ENCODE measurements at regions of chr16 and their contacts with region 1.

Region 1: GRCh38 chr16:56988948-56989945 is at the start of gene NLRC5:
- DNase-seq: peak; percentile 91
- ATAC-seq: peak; percentile 87
- H3K4me3 Mint-ChIP-seq: peak within 1 kb of the TSS; percentile 99
- H3K27ac Mint-ChIP-seq: peak within 1 kb of the TSS; percentile 99
- H3K4me1 Mint-ChIP-seq: peaks cover 56% of the 10 kb centered on the region
- H3K27me3 Mint-ChIP-seq: no peaks in the 10 kb centered on the region
- total RNA-seq, gene NLRC5: 401 to 414 TPM

Region 2: GRCh38 chr16:56964243-56965148 is 24.8 kb before region 1 on chr16:
- POLR2A ChIA-PET with region 1: interaction called, 16 read pairs
- DNase-seq: peak; percentile 99
- ATAC-seq: peak; percentile 79
- H3K4me3 Mint-ChIP-seq: no peak overlapping the region
- H3K27ac Mint-ChIP-seq: peak overlapping the region; percentile 87
- H3K4me1 Mint-ChIP-seq: peaks cover 21% of the 10 kb centered on the region
- H3K27me3 Mint-ChIP-seq: peaks cover 7% of the 10 kb centered on the region

Region 3: GRCh38 chr16:57000271-57001025 is 11.2 kb after region 1 on chr16:
- POLR2A ChIA-PET with region 1: interaction called, 47 read pairs
- DNase-seq: peak; percentile 39
- ATAC-seq: peak; percentile 48
- H3K4me3 Mint-ChIP-seq: peak overlapping the region; percentile 29
- H3K27ac Mint-ChIP-seq: peak overlapping the region; percentile 92
- H3K4me1 Mint-ChIP-seq: peaks cover 81% of the 10 kb centered on the region
- H3K27me3 Mint-ChIP-seq: no peaks in the 10 kb centered on the region

Region 4: GRCh38 chr16:57009643-57010170 is 20.5 kb after region 1 on chr16:
- POLR2A ChIA-PET with region 1: interaction called, 18 read pairs
- DNase-seq: peak; percentile 31
- ATAC-seq: peak; percentile 38
- H3K4me3 Mint-ChIP-seq: peak overlapping the region; percentile 43
- H3K27ac Mint-ChIP-seq: peak overlapping the region; percentile 80
- H3K4me1 Mint-ChIP-seq: peaks cover 61% of the 10 kb centered on the region
- H3K27me3 Mint-ChIP-seq: no peaks in the 10 kb centered on the region

Region 5: DNA sequence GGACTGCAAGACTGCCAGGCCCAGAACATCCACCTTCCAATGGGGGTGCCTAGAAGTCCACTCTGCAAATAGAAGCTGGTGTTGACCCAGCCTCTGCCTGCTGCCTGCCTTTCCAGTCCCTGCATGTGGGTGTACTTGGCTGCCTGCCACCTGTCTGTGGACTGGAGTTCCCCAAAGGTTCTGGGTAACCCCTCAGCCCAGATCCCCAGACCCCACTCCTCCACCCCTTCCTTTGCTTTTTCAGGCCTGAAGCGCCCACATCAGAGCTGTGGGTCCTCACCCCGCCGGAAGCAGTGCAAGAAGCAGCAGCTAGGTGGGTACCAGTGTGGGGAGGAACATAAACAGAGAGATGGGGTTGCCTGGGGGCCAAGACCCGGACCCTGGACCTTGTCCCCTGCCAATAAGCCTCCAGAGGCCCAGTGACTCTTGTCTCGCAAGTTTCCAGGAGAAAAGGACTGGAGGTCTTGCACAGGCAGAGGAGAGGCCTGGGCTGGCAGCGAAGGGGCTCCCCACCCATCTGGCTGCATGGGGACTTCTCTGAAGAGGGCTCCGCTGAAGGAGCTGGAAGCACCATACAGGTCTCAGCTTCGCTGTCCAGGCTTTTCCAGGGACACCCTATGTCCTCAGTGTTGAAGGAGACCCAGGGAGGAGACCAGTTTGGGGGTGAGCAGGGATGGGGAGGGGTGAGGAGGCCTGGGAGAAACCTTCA is 34.4 kb after region 1 on chr16:
- POLR2A ChIA-PET with region 1: interaction called, 25 read pairs
- DNase-seq: peak; percentile 73
- ATAC-seq: peak; percentile 77
- H3K4me3 Mint-ChIP-seq: peak overlapping the region; percentile 66
- H3K27ac Mint-ChIP-seq: peak overlapping the region; percentile 84
- H3K4me1 Mint-ChIP-seq: peaks cover 67% of the 10 kb centered on the region
- H3K27me3 Mint-ChIP-seq: no peaks in the 10 kb centered on the region

Region 6: DNA sequence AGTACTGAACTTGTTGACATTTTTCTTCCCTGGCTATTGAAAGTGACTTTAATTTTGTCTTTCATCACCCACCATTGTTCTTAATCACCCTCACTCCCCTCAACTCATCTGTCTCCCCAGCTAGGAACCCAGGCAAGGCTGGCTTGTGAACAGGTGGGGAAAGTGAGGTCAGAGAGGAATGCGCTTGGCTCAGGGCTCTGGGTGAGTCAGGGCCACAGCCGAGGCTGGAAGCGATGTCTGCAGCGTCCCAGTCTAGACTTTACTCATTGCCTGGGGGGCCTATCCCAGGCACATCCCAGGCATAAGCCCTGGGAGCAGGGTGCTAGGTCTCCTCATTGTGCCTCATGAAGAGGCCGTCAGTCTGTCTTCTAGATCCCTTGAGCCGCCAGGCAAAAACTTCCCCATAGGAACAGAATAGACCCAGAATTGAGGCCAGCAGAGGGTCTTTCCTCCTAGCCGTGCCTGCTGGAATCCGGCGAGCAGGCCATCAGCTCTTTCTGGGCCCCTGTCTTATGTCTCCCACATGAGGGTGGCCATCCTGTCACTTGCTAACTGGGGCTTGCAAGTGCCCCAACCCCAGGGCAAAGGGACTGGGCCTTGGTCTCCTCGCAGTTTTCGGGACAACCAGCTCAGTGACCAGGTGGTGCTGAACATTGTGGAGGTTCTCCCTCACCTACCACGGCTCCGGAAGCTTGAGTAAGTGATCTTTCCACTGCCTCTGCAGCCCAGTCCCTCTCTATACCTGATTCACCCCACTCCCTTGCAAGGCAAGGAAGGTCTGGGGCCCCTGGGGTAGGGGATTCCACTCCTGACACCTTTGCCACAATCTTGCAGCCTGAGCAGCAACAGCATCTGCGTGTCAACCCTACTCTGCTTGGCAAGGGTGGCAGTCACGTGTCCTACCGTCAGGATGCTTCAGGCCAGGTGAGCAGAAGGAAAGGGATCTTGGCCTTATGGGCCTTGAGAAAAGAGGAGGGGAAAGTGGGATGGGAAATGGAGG is 40.2 kb after region 1 on chr16:
- POLR2A ChIA-PET with region 1: interaction called, 25 read pairs
- DNase-seq: no peak
- ATAC-seq: no peak
- H3K4me3 Mint-ChIP-seq: no peak overlapping the region
- H3K27ac Mint-ChIP-seq: no peak overlapping the region
- H3K4me1 Mint-ChIP-seq: peaks cover 42% of the 10 kb centered on the region
- H3K27me3 Mint-ChIP-seq: no peaks in the 10 kb centered on the region

Region 7: GRCh38 chr16:57042157-57043111 is 53.2 kb after region 1 on chr16:
- POLR2A ChIA-PET with region 1: interaction called, 75 read pairs
- DNase-seq: peak; percentile 64
- ATAC-seq: peak; percentile 40
- H3K4me3 Mint-ChIP-seq: peak overlapping the region; percentile 80
- H3K27ac Mint-ChIP-seq: peak overlapping the region; percentile 98
- H3K4me1 Mint-ChIP-seq: peaks cover 64% of the 10 kb centered on the region
- H3K27me3 Mint-ChIP-seq: no peaks in the 10 kb centered on the region